ENCODE measurements at regions of chr18 and their contacts with region 1.

Region 1: GRCh38 chr18:59631583-59632181 is 65.5 kb downstream of the CCBE1 start:
- DNase-seq: no peak
- H3K4me3 ChIP-seq: no peak overlapping the region
- CTCF ChIP-seq: peak; percentile 59

Region 2: DNA sequence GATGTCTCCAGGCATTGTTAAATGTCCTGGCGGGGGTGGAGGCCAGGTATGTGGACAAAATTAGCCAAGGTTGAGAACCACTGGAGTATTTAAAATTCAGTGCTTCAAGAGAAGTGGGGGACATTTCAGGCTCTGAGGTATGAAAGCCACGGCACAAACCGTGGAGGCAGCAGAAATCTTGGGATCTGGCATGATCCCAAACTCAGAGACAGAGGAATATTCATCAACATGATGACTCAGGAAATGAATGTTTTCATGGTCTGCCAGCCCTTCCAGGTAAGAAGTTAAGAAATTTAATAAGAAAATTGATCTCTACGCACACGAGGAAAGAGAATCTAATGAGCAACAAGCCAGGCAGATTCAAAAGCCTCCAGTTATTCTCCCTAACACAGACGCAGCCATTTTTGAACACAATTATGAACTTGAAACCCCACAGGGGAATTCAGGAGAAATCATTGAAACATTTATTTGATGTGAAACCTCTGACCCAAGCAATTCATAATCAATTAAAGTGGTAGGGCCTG is 423.0 kb before region 1 on chr18:
- CTCF ChIA-PET with region 1: no interaction called
- POLR2A ChIA-PET with region 1: no interaction called
- DNase-seq: no peak
- H3K4me3 ChIP-seq: no peak overlapping the region
- CTCF ChIP-seq: no peak

Region 3: GRCh38 chr18:59646228-59646962 is 14.7 kb after region 1 on chr18:
- CTCF ChIA-PET with region 1: interaction called, 15 read pairs
- POLR2A ChIA-PET with region 1: no interaction called
- DNase-seq: no peak
- H3K4me3 ChIP-seq: no peak overlapping the region
- CTCF ChIP-seq: no peak

Region 4: DNA sequence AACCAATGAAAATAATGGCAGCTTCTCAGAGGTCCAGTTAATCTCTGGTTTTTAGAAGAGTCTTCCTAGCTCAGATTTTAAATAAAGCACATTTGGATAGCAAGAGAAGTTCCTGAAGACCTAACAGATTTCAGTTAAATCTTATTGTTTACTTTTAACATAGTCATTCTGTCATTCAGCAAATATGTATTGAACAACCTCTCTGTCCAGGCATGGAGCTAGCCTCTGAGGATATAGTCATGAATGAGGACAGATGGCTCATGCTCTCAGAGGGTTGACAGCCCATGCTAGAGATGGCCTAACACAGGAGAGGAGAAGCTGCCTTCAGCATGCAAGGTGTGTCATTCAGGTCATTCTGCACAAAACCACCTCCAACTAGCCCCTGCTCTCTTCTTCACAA is 59.3 kb after region 1 on chr18:
- CTCF ChIA-PET with region 1: interaction called, 20 read pairs
- POLR2A ChIA-PET with region 1: no interaction called
- DNase-seq: no peak
- H3K4me3 ChIP-seq: no peak overlapping the region
- CTCF ChIP-seq: no peak

Region 5: GRCh38 chr18:59705145-59705544 is 73.5 kb after region 1 on chr18:
- CTCF ChIA-PET with region 1: interaction called, 12 read pairs
- POLR2A ChIA-PET with region 1: no interaction called
- DNase-seq: no peak
- H3K4me3 ChIP-seq: no peak overlapping the region
- CTCF ChIP-seq: no peak

Region 6: DNA sequence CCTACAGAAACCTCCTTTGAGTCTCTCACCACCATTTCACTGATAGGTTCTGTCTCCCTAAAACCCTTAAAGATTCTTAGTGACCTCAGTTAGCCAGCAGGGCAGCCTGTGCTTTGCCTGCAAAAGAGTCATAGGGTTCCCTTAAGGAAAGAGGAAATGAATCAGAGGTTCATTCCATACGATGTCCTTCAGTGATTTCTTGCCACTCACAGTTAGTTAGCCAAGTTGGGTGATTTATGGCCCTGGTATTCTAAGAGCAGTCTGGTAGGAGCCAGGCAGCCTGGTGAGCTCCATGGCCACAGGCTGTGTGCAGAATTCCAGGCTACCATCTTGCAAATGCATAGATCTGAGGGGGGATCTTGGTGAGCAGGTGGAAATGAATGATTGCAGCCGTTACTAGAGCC is 84.3 kb after region 1 on chr18:
- CTCF ChIA-PET with region 1: interaction called, 10 read pairs
- POLR2A ChIA-PET with region 1: interaction called, 3 read pairs
- DNase-seq: peak; percentile 69
- H3K4me3 ChIP-seq: no peak overlapping the region
- CTCF ChIP-seq: peak; percentile 17

Region 7: DNA sequence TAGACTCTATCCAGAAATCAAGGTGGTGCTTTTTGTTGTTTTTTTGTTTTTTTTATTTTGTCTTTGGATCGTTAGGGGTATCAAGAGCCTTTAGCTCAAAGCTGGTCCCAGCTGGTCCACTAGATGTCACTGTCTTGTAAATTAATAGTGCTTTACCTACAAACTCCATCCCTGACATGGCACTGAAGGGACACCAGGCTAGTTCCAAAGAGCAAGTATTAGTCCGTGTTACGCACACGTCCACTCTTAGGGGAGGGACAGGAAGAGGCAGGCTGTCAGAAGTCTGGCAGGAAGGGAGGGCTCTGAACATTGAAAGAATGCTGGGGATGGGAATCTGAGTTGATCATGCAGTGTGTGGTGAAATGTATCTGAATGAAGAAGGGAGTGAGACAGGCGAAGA is 151.5 kb after region 1 on chr18:
- CTCF ChIA-PET with region 1: interaction called, 19 read pairs
- POLR2A ChIA-PET with region 1: no interaction called
- DNase-seq: no peak
- H3K4me3 ChIP-seq: no peak overlapping the region
- CTCF ChIP-seq: peak; percentile 46

Region 8: DNA sequence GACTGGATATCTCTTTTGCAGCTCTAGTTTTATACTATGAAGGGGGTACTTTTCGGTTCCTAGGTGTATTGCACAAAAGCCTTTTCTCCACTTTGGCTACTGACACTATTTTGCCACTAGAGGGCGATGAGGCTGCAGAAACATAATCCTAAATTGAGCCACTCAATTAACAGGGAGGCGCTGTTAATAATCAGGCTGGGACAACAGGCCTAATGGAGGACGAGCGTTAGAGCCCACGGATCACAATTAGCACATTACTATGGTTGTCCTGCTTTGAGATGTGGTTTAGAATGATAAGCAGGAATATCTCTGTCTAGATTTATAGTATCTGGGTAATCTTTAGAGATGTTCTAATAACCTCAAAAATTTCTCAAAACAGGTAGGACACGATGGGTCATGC is 205.9 kb after region 1 on chr18:
- CTCF ChIA-PET with region 1: interaction called, 13 read pairs
- POLR2A ChIA-PET with region 1: no interaction called
- DNase-seq: no peak
- H3K4me3 ChIP-seq: no peak overlapping the region
- CTCF ChIP-seq: peak; percentile 79